Gastrocnemius medialis (tissue), 4 donors: ENCODE measurements at regions of chr3 and their contacts with region 1.

Region 1: DNA sequence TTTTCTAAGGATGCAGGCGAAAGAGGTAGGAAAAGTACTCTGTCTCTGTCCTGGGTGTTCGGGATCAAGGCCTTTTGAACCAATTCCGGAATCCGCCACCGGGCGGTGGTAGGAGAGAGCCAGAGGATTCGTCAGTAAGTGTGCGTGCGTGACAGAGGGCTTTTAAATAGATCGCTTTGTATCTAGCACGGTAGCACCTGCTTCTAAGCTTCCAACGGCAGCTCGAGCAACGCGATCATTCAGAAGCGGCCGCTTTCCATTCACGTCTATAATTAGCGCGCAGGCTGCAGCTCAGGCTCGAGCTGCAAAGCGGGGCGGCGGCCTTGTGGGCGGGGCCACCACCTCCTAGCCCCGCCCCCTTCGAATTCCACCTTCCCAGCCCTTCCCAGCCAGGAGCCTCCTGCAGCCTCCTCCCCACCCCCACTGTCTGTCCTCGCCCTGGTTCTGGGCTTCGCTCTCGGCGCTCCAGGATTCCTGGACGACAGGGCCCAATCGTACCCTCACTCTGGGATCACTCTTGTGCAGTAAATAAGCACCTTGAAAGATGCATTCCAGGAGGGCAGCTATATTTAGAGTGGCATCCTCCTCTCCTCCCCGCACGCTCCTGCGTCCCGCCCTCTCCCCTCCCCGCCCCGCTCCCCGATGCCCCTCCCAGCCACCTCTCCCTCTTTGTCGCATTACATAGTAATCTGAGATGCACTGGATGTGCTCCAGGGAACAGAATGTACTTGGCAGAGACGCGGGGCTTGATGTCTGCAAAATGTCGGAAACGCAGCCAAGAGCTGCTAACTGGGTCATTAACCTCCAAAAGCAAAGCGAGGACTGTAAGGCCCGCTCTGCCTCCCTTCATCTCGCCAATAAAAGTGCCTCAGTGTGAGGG is 224.1 kb upstream of the TPRG1 start:
- DNase-seq: peak; percentile 97 to 99
- ATAC-seq: peak; percentile 78 to 84
- H3K4me3 ChIP-seq: peak overlapping the region; percentile 47 to 58 (median 54)
- H3K27ac ChIP-seq: peak overlapping the region; percentile 92 to 98 (median 98)
- H3K4me1 ChIP-seq: peaks cover 44% of the 10 kb centered on the region in 2 donors
- H3K27me3 ChIP-seq: no peaks in the 10 kb centered on the region
- CTCF ChIP-seq: peak; percentile 48 to 75 (median 60)
- POLR2A ChIP-seq: peak; percentile 67 to 77

Region 2: GRCh38 chr3:187919048-187919447 is 1028.6 kb before region 1 on chr3:
- in situ Hi-C with region 1: loop called in 1 of 4 experiments (anchors 10 kb)
- intact Hi-C with region 1: loop called (anchors 5 kb)
- DNase-seq: no peak
- ATAC-seq: no peak
- H3K4me3 ChIP-seq: no peak overlapping the region
- H3K27ac ChIP-seq: peak overlapping the region in 3 of 4 donors; percentile 35 to 80 (median 79)
- H3K4me1 ChIP-seq: peaks cover 33 to 38% of the 10 kb centered on the region in 2 donors
- H3K27me3 ChIP-seq: no peaks in the 10 kb centered on the region
- CTCF ChIP-seq: no peak
- POLR2A ChIP-seq: no peak

Region 3: GRCh38 chr3:188154014-188154808 is 793.4 kb before region 1 on chr3 and contains the start of gene LPP:
- in situ Hi-C with region 1: loop called in 1 of 4 experiments (anchors 25 kb)
- intact Hi-C with region 1: loop called (anchors 5 kb)
- DNase-seq: peak; percentile 53 to 76
- ATAC-seq: peak; percentile 60 to 70
- H3K4me3 ChIP-seq: peak within 1 kb of the TSS; percentile 61 to 96 (median 83)
- H3K27ac ChIP-seq: peak within 1 kb of the TSS; percentile 93 to 98 (median 98)
- H3K4me1 ChIP-seq: peaks cover 44 to 54% of the 10 kb centered on the region in 2 donors
- H3K27me3 ChIP-seq: no peaks in the 10 kb centered on the region
- CTCF ChIP-seq: no peak
- POLR2A ChIP-seq: peak; percentile 78 to 80
- total RNA-seq, gene LPP: 56.0 to 65.7 (median 58.1) TPM

Region 4: GRCh38 chr3:188286087-188286513 is 661.5 kb before region 1 on chr3:
- in situ Hi-C with region 1: loop called in 1 of 4 experiments (anchors 25 kb)
- intact Hi-C with region 1: loop called (anchors 5 kb)
- DNase-seq: peak; percentile 88 to 92
- ATAC-seq: peak; percentile 97 to 98
- H3K4me3 ChIP-seq: no peak overlapping the region
- H3K27ac ChIP-seq: peak overlapping the region; percentile 82 to 99 (median 90)
- H3K4me1 ChIP-seq: peaks cover 46 to 51% of the 10 kb centered on the region in 2 donors
- H3K27me3 ChIP-seq: no peaks in the 10 kb centered on the region
- CTCF ChIP-seq: no peak
- POLR2A ChIP-seq: peak; percentile 59 to 81

Region 5: DNA sequence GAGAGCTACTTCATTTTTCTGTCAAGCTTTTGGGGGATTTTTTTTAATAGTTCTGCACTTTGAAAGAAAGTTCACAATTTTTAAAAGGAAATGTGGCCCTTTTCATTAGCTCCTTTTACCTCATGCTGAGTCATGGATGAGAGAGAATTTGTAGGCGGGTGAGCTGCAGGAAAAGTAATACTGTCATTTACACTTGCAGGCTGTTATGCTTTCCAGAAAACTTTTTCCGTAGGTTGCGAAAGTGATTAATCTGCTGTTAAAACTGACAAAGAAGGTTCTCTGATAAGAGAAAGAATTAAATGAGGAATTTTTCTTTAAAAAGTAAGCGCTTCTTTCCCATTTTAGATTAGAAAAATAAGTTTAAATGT is 363.5 kb before region 1 on chr3:
- in situ Hi-C with region 1: loop called in 1 of 4 experiments (anchors 10 kb)
- intact Hi-C with region 1: loop called (anchors 10 kb)
- DNase-seq: peak in 1 of 2 donors; percentile 17
- ATAC-seq: peak; percentile 76 to 79
- H3K4me3 ChIP-seq: peak overlapping the region; percentile 17 to 44 (median 20)
- H3K27ac ChIP-seq: peak overlapping the region; percentile 67 to 77 (median 74)
- H3K4me1 ChIP-seq: peaks cover 39 to 42% of the 10 kb centered on the region in 2 donors
- H3K27me3 ChIP-seq: no peaks in the 10 kb centered on the region
- CTCF ChIP-seq: no peak
- POLR2A ChIP-seq: no peak